ENCODE measurements at regions of chr13 and their contacts with region 1.

Region 1: GRCh38 chr13:87274209-87274819 is 396.9 kb upstream of the SLITRK5 start:
- DNase-seq: peak; percentile 71 to 85 (median 76)
- H3K4me3 ChIP-seq: no peak overlapping the region
- H3K27ac ChIP-seq: no peak overlapping the region
- H3K4me1 ChIP-seq: peaks cover 0 to 5% (median 0%) of the 10 kb centered on the region in 4 experiments
- H3K27me3 ChIP-seq: no peaks in the 10 kb centered on the region

Region 2: DNA sequence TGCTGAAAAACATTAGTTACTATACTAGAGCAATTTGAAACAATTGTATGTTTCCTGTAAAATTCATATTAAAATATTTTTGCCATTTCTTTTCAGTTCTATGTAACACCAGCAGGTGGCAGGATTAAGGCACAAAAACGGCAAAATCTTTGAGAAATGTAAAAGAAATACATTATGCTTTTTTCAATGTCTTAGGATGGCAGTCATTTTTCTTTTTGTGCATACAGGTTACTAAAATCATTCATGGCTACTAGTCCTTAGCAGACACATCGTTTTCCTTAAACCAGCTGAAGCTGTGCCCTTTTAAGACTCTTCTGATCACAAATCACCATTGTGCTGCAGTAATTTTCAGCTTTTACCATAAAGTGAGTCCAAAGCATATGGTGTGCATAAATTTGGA is 403.9 kb before region 1 on chr13:
- CTCF ChIA-PET with region 1: interaction called, 54 read pairs
- POLR2A ChIA-PET with region 1: no interaction called
- DNase-seq: peak; percentile 25 to 71 (median 61)
- H3K4me3 ChIP-seq: no peak overlapping the region
- H3K27ac ChIP-seq: no peak overlapping the region
- H3K4me1 ChIP-seq: peaks cover 0 to 8% (median 2%) of the 10 kb centered on the region in 4 experiments
- H3K27me3 ChIP-seq: no peaks in the 10 kb centered on the region

Region 3: DNA sequence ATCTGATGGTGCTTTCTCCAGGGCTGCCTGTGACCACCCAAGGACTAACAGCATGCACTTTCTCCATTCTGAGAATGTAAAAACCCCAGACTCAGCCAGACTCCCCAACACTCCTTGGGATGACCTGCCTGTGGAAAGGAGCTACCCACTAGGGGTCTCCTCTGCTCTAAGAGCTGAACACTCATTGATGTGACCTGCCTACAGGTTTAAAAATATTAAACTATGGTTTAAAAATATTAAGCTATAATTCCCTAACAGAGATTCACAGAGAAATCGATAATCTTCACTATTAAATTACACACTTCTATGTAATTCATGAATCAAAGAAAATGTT is 299.4 kb before region 1 on chr13:
- CTCF ChIA-PET with region 1: interaction called, 21 read pairs
- POLR2A ChIA-PET with region 1: no interaction called
- DNase-seq: peak; percentile 13 to 27 (median 19)
- H3K4me3 ChIP-seq: no peak overlapping the region
- H3K27ac ChIP-seq: no peak overlapping the region
- H3K4me1 ChIP-seq: no peaks in the 10 kb centered on the region
- H3K27me3 ChIP-seq: no peaks in the 10 kb centered on the region

Region 4: DNA sequence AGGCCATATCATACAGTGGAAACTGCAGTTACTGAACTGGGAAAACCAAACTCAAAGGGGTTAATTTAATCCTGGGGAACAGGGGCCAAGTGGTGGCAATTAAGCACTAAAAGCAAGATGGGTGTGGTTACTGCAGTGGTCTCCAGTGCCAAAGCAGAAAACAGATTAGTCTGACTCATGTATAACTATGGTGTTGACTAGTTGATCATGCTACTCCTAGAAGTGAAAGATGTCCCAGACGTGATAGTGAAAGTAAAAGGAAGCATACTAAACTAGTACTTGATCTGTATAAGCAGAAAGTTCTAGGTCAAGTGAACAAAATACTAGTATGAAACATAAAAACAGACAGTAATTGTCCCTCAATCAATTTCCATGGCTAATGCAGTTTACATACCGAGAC is 36.9 kb after region 1 on chr13:
- CTCF ChIA-PET with region 1: no interaction called
- POLR2A ChIA-PET with region 1: no interaction called
- DNase-seq: no peak
- H3K4me3 ChIP-seq: no peak overlapping the region
- H3K27ac ChIP-seq: no peak overlapping the region
- H3K4me1 ChIP-seq: no peaks in the 10 kb centered on the region
- H3K27me3 ChIP-seq: no peaks in the 10 kb centered on the region

Region 5: GRCh38 chr13:88107570-88107969 is 833.3 kb after region 1 on chr13:
- CTCF ChIA-PET with region 1: no interaction called
- POLR2A ChIA-PET with region 1: no interaction called
- DNase-seq: peak in 2 of 3 donors; percentile 31 to 59
- H3K4me3 ChIP-seq: no peak overlapping the region
- H3K27ac ChIP-seq: no peak overlapping the region
- H3K4me1 ChIP-seq: peaks cover 0 to 3% (median 1%) of the 10 kb centered on the region in 4 experiments
- H3K27me3 ChIP-seq: no peaks in the 10 kb centered on the region